Heart left ventricle (tissue), 16 donors: ENCODE measurements at regions of chr14 and their contacts with region 1.

Region 1: GRCh38 chr14:76962303-76962660 is 66.2 kb downstream of the IRF2BPL start:
- DNase-seq: peak in 1 of 5 donors; percentile 14
- ATAC-seq: no peak
- H3K4me3 ChIP-seq: peak overlapping the region; percentile 8 to 68 (median 51)
- H3K27ac ChIP-seq: peak overlapping the region; percentile 56 to 99 (median 88)
- H3K4me1 ChIP-seq: peaks cover 0 to 51% (median 21%) of the 10 kb centered on the region in 12 donors
- H3K27me3 ChIP-seq: no peaks in the 10 kb centered on the region
- CTCF ChIP-seq: no peak
- POLR2A ChIP-seq: no peak

Region 2: GRCh38 chr14:76697246-76697905 is 264.9 kb before region 1 on chr14:
- intact Hi-C with region 1: no loop called
- DNase-seq: no peak
- ATAC-seq: no peak
- H3K4me3 ChIP-seq: no peak overlapping the region
- H3K27ac ChIP-seq: no peak overlapping the region
- H3K4me1 ChIP-seq: peaks cover 0 to 21% (median 3%) of the 10 kb centered on the region in 12 donors
- H3K27me3 ChIP-seq: no peaks in the 10 kb centered on the region
- CTCF ChIP-seq: no peak
- POLR2A ChIP-seq: no peak

Region 3: DNA sequence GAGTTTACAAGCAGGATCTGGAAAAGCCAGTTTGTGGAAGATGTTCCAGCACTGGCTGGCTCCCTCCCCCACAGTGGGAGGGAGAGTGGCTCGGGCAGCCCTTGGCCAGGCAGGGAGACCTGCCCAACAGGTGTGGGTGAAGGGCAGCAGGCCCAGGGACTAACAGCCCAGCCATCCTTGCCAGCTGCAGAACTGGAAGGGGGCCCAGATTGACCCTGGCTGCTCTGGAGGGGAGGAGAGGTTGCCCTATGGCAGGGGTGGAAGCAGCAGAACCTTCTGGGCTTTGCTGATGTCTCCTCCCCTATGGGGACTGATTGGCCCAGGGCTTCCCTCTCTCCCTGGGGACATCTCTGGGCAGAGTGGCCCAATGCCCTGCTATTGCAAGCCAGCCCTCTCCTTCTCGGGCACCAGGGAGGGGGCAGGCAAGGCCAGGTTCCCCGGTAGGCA is 45.7 kb after region 1 on chr14:
- intact Hi-C with region 1: loop called in 4 of 10 experiments (anchors 5 kb)
- DNase-seq: peak; percentile 56 to 83 (median 62)
- ATAC-seq: peak; percentile 67 to 88 (median 84)
- H3K4me3 ChIP-seq: no peak overlapping the region
- H3K27ac ChIP-seq: peak overlapping the region in 11 of 12 donors; percentile 30 to 68 (median 42)
- H3K4me1 ChIP-seq: peaks cover 0 to 23% (median 14%) of the 10 kb centered on the region in 12 donors
- H3K27me3 ChIP-seq: no peaks in the 10 kb centered on the region
- CTCF ChIP-seq: no peak
- POLR2A ChIP-seq: no peak

Region 4: DNA sequence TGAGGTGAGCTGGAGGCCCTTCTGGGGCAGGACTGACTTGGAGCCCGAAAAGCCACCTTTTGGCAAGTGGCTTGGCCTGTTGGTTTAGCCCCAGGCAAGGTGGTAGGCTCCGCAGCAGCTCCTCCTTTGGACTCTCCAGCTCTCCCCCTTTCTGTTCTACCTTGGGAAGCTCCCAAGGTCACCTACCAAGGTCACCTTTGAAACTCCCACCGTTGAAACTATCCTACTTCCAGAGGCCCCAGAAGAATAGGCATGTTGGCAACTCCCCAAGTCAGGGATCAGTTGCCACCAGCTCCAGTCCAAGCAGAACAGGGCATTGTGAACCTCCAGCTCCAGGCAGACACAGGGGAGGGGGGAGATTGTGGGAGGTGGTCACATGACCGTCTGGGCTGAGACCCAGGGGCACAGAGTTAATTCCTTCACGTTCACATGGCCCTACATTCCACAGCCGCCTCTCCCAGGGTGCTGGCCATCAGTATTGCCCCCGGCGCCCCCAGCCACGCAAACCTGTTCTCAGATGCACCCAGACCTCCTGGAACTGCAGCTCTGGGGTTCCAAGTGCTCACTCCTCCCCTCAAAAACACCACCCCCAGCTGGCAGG is 51.8 kb after region 1 on chr14:
- intact Hi-C with region 1: loop called in 4 of 10 experiments (anchors 5 kb)
- DNase-seq: peak in 4 of 5 donors; percentile 79 to 88 (median 81)
- ATAC-seq: peak; percentile 94 to 97 (median 96)
- H3K4me3 ChIP-seq: no peak overlapping the region
- H3K27ac ChIP-seq: peak overlapping the region in 11 of 12 donors; percentile 18 to 88 (median 65)
- H3K4me1 ChIP-seq: peaks cover 0 to 17% (median 10%) of the 10 kb centered on the region in 12 donors
- H3K27me3 ChIP-seq: no peaks in the 10 kb centered on the region
- CTCF ChIP-seq: no peak
- POLR2A ChIP-seq: no peak

Region 5: GRCh38 chr14:77023001-77023996 is 61.0 kb after region 1 on chr14:
- intact Hi-C with region 1: loop called in 7 of 10 experiments (anchors 2 to 5 kb)
- DNase-seq: peak in 2 of 5 donors; percentile 46
- ATAC-seq: peak; percentile 35 to 64 (median 56)
- H3K4me3 ChIP-seq: peak overlapping the region in 10 of 12 donors; percentile 6 to 96 (median 82)
- H3K27ac ChIP-seq: peak overlapping the region; percentile 73 to 100 (median 99)
- H3K4me1 ChIP-seq: peaks cover 10 to 47% (median 36%) of the 10 kb centered on the region in 12 donors
- H3K27me3 ChIP-seq: no peaks in the 10 kb centered on the region
- CTCF ChIP-seq: peak in 3 of 12 donors; percentile 20 to 27 (median 23)
- POLR2A ChIP-seq: no peak